ENCODE measurements at regions of chr3 and their contacts with region 1.

Region 1: DNA sequence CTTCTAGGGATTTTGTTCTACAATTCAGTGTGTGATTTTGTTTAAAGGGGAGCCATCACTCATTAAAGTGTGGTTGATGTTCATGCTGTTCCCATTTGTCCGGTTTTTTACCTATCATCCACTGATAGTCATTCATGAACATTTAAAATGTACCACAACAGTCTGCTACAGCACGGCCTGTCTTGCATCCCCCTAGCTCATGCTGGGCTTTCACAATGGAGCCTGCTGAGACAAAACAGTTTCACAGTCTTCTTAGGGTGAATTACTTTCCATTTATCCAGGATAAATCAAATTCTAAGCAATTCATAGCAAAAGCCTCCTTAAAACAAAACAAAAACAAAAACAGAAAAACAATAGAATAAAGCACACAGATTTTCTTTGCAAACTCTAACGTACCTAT is 627.2 kb downstream of the CADM2 start:
- DNase-seq: no peak

Region 2: DNA sequence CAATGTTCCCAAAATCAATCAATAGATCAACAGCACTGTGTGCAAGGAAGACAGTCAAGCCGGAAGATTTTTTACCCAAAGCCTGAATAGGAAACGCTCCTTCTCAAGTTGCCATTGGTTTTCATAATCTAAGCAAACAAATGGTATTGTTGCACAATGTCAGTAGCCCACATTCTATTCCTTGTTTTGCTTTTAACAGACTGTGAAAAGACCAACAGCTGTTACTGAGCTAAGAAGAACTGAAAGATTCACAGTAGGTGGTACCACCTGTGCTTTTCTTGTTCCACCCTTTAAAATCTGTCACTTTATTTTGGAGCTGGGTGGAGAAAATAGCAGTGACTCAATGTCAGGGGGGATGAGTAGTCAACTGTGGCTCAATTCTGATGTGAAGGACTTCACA is 984.7 kb before region 1 on chr3:
- intact Hi-C with region 1: no loop called
- DNase-seq: no peak

Region 3: GRCh38 chr3:85508659-85509058 is 77.4 kb before region 1 on chr3:
- intact Hi-C with region 1: no loop called
- DNase-seq: no peak

Region 4: GRCh38 chr3:85535517-85535916 is 50.5 kb before region 1 on chr3:
- intact Hi-C with region 1: loop called in 1 of 2 experiments (anchors 2 kb)
- DNase-seq: no peak